Activated CD4-positive, alpha-beta T cell treated with anti-CD3 and anti-CD28 coated beads, Interleukin-2, amount 10 ng/mL, durations not matched to agents 7 days and 5 days (primary cell): ENCODE measurements at regions of chr1 and their contacts with region 1.

Region 1: DNA sequence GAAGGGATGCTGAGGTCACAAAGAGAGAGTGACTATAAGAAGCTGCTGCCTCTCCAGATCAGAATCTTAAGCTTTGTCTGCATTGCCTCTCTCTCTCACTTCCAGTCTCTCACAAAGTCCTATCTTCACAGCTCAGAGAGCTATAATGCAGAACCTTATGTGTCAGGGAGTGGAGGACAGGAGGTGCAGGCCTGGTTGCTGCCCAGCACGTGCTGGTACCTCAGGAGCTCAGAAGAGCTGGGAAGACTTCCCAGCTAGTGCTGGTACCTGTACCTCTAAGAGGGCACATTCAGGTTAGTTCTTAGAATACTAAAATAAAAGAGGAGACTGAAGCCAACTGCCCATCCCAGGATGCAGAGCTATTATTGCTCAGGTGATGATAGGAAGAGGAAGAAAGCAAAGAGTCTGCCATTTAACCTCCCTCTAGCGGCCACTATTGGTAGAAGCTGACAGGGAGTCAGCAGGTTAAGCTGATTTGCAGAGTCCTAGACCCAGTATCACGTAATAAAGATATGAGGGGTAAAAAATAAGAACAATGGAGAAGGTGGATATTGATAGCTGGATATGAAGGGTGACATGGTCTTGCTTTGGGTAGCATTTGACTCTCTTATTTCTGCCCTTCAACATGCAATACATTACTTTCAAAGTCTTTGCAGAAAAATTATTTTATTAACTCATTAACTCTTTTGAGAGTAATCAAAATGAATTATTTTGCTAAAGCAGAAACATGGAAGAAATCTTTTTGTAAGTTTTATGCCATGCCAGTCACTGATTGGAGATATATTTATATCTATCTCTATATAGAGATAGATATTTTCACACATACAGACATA is 138.1 kb upstream of the HMCN1 start:
- DNase-seq: peak; percentile 57
- H3K4me3 Mint-ChIP-seq: no peak overlapping the region
- H3K27ac Mint-ChIP-seq: no peak overlapping the region
- H3K4me1 Mint-ChIP-seq: peaks cover 10% of the 10 kb centered on the region
- H3K27me3 Mint-ChIP-seq: no peaks in the 10 kb centered on the region

Region 2: GRCh38 chr1:185549906-185550305 is 46.1 kb before region 1 on chr1:
- CTCF ChIA-PET with region 1: no interaction called
- POLR2A ChIA-PET with region 1: no interaction called
- DNase-seq: no peak
- H3K4me3 Mint-ChIP-seq: no peak overlapping the region
- H3K27ac Mint-ChIP-seq: no peak overlapping the region
- H3K4me1 Mint-ChIP-seq: no peaks in the 10 kb centered on the region
- H3K27me3 Mint-ChIP-seq: no peaks in the 10 kb centered on the region

Region 3: DNA sequence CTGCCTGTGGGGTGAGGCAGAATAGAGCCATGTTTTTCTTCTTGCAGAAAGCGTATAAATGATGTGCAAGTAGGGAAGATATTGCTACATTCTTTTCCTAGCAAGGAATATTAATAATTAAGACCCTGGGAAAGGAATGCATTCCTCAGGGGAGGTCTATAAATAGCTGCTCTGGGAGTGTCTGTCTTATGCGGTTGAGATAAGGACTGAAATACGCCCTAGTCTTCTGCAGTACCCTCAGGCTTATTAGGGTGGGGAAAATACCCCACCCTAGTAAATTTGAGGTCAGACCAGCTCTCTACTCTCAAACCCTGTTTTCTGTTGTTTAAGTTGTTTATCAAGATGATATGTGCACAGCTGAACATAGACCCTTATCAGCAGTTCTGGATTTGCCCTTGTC is 17.8 kb before region 1 on chr1:
- CTCF ChIA-PET with region 1: interaction called, 10 read pairs
- POLR2A ChIA-PET with region 1: no interaction called
- DNase-seq: no peak
- H3K4me3 Mint-ChIP-seq: no peak overlapping the region
- H3K27ac Mint-ChIP-seq: no peak overlapping the region
- H3K4me1 Mint-ChIP-seq: no peaks in the 10 kb centered on the region
- H3K27me3 Mint-ChIP-seq: no peaks in the 10 kb centered on the region

Region 4: GRCh38 chr1:185585770-185586169 is 10.3 kb before region 1 on chr1:
- CTCF ChIA-PET with region 1: interaction called, 12 read pairs
- POLR2A ChIA-PET with region 1: no interaction called
- DNase-seq: no peak
- H3K4me3 Mint-ChIP-seq: no peak overlapping the region
- H3K27ac Mint-ChIP-seq: no peak overlapping the region
- H3K4me1 Mint-ChIP-seq: no peaks in the 10 kb centered on the region
- H3K27me3 Mint-ChIP-seq: no peaks in the 10 kb centered on the region